ENCODE measurements at regions of chr16 and their contacts with region 1.

Region 1: DNA sequence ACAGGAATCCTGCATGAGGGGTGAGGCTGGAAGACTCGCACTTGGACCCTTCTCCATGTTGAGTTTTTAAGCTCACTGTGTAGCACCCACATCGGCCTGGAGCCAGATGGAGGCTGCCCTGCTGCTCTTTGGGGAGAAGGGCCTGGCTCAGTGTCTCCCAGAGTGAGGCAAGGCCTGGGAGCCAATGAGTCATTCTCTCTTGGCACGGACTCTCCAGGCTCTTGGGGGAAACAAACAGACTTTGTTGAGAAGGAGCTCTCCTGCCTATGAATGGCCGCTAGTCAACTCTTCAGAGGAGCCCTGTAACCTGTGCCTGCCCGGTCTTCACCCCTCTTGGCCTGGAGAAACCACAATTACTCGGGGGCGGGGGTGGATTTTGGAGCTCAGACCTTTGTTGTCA is 50.8 kb upstream of the MAF start:
- DNase-seq: peak; percentile 82 to 85
- ATAC-seq: peak; percentile 85
- H3K4me3 ChIP-seq: no peak overlapping the region
- H3K27ac ChIP-seq: no peak overlapping the region
- H3K4me1 ChIP-seq: no peaks in the 10 kb centered on the region
- H3K27me3 ChIP-seq: no peaks in the 10 kb centered on the region

Region 2: DNA sequence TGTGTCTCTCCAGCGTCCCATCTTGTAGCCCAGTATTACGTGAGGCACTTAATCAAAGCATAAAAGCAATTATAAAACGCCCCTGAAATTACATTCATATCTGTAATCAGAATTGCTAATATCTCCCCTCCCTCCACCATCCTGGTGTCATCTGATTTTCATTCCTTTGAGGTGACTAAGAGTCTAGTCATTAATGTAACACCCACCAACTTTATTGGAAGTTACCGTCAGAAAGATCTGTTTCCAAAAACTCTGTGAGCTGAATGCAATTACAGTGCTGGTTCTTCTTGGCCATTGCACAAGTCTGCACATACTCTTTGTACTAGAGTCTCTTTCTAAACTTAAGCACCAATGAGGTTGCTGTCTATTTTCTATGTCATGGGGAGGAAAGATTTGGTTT is 38.4 kb before region 1 on chr16:
- intact Hi-C with region 1: loop called in 1 of 2 experiments (anchors 5 kb)
- DNase-seq: no peak
- ATAC-seq: no peak
- H3K4me3 ChIP-seq: no peak overlapping the region
- H3K27ac ChIP-seq: no peak overlapping the region
- H3K4me1 ChIP-seq: no peaks in the 10 kb centered on the region
- H3K27me3 ChIP-seq: no peaks in the 10 kb centered on the region

Measured in aorta (tissue), 5 donors.